Activated CD4-positive, alpha-beta T cell treated with anti-CD3 and anti-CD28 coated beads for 36 hours (primary cell): ENCODE measurements at regions of chr3 and their contacts with region 1.

Region 1: DNA sequence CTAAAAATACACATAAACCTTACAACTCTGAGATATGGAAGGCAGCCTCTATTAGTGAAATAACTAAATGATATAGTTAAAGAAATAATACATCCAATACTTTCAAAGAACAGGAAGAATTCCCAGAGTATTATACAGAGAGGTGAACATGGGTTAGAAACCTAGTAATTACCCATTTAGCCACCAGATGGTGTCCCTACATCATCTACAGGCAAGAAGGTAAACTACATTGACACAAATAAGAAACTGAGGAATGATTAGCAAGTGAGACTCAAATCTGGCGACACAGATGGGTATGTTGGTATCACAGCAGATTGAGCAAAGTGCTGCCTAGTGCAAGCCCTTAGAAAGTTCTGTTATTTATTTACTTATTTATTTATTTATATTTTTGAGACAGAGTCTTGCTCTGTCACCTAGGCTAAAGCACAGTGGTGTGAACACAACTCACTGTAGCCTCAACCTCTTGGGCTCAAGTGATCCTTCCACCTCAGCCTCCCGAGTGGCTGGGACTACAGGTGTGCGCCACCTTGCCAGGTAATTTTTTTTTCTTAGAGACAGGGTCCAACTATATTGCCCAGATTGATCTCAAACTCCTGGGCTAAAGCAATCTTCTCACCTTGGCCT is 28.2 kb downstream of the NEK4 start:
- DNase-seq: no peak
- ATAC-seq: no peak
- H3K4me3 Mint-ChIP-seq: no peak overlapping the region
- H3K27ac Mint-ChIP-seq: no peak overlapping the region
- H3K4me1 Mint-ChIP-seq: no peaks in the 10 kb centered on the region
- H3K27me3 Mint-ChIP-seq: no peaks in the 10 kb centered on the region

Region 2: GRCh38 chr3:51879937-51880336 is 862.6 kb before region 1 on chr3:
- CTCF ChIA-PET with region 1: no interaction called
- POLR2A ChIA-PET with region 1: no interaction called
- intact Hi-C with region 1: no loop called
- DNase-seq: no peak
- ATAC-seq: no peak
- H3K4me3 Mint-ChIP-seq: no peak overlapping the region
- H3K27ac Mint-ChIP-seq: no peak overlapping the region
- H3K4me1 Mint-ChIP-seq: no peaks in the 10 kb centered on the region
- H3K27me3 Mint-ChIP-seq: peaks cover 8% of the 10 kb centered on the region

Region 3: DNA sequence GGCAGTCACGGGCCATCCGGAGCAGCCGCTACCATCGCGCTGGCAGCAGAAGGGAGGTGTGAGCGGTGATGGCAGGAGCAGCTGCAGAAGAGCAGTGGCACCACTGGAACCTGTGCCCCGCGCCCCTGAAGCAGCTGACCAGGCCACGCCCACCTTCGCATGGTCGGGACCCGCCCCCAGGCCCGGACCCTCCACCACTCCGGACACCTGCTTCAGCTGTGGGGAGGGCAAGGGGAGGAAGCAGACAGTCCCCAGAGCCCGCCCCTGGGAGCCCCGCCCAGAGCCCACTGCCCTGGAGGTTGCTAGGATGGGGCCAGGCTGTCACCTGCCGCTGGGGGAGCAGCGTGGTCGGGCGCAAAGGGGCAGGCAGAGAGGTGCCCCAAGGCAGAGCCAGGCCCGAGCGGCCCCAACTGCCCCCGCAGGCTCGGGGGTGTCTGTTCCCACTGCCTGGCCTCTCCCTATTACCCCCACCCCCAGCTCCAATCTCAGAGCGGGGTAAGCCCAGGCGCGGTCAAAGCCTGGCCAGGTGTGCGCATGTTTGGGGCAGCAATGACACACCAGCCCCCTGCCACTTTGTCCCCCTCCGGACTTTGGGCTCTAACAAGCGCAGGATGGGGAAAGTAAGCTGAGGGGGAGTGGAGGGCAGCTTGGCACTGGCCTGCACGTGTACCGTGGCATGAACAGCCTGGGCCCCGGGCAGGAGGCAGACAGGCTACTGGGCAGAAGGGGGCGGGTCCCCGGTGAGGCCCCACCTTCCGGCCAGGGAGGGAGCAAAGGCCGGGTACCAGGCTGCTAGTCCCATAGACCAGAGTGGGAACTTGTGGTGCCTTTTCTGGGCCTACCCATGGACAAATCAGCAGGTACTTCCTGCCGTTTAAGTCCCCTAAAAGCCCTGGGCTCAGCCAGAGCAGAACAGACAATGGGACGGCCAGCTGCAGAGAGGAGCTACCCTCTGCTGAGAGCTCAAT is 27.9 kb before region 1 on chr3:
- CTCF ChIA-PET with region 1: no interaction called
- POLR2A ChIA-PET with region 1: no interaction called
- intact Hi-C with region 1: no loop called
- DNase-seq: no peak
- ATAC-seq: no peak
- H3K4me3 Mint-ChIP-seq: no peak overlapping the region
- H3K27ac Mint-ChIP-seq: no peak overlapping the region
- H3K4me1 Mint-ChIP-seq: peaks cover under 1% of the 10 kb centered on the region
- H3K27me3 Mint-ChIP-seq: no peaks in the 10 kb centered on the region

Region 4: GRCh38 chr3:52820736-52821135 is 78.2 kb after region 1 on chr3:
- CTCF ChIA-PET with region 1: interaction called, 4 read pairs
- POLR2A ChIA-PET with region 1: no interaction called
- intact Hi-C with region 1: loop called in 1 of 2 experiments (anchors 2 kb)
- DNase-seq: peak; percentile 60
- ATAC-seq: peak; percentile 89
- H3K4me3 Mint-ChIP-seq: no peak overlapping the region
- H3K27ac Mint-ChIP-seq: no peak overlapping the region
- H3K4me1 Mint-ChIP-seq: no peaks in the 10 kb centered on the region
- H3K27me3 Mint-ChIP-seq: no peaks in the 10 kb centered on the region

Region 5: DNA sequence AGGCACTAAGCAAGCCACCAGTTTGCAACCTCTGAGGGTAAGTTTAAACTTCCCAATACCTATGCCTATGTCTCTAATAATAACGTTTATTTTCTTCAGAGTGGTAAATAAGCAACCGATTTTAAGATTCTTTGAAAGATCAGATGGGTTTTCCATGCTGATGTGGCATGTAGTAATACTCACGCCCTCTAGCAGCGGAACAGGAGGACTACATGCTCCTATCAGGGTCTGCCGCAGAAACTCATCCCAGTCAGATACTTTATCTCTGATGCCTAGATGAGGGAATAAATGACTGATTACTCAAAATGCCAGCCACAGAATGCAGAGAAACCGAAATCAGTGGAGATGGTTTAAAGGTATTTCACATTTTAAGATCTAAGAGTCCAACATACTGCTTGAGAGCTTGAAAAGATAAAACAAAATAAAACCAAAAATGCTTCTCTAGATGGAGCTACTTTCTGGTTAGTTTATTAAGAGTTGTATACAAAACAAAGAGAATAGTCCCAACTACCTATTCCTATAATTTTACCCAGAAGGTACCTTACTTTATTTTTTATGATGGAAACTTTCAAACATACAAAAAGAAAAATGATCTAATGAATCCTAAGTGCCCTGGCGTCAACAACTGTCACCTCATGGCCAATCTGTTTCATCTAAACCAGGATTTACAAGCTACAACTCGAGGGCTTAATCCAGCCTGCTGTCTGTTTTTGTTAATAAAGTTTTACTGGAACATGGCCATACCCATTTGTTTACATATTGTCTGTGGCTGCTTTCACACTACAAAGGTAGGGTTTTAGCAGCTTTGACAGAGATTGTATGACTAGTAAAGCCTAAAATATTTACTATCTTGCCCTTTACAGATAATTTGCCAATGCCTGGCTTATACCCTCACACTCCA is 192.3 kb after region 1 on chr3:
- CTCF ChIA-PET with region 1: no interaction called
- POLR2A ChIA-PET with region 1: no interaction called
- intact Hi-C with region 1: loop called (anchors 2 to 5 kb)
- DNase-seq: peak; percentile 75
- ATAC-seq: peak; percentile 99
- H3K4me3 Mint-ChIP-seq: no peak overlapping the region
- H3K27ac Mint-ChIP-seq: no peak overlapping the region
- H3K4me1 Mint-ChIP-seq: peaks cover 12% of the 10 kb centered on the region
- H3K27me3 Mint-ChIP-seq: no peaks in the 10 kb centered on the region